Common myeloid progenitor, CD34-positive (primary cell): ENCODE measurements at regions of chr9 and their contacts with region 1.

Region 1: DNA sequence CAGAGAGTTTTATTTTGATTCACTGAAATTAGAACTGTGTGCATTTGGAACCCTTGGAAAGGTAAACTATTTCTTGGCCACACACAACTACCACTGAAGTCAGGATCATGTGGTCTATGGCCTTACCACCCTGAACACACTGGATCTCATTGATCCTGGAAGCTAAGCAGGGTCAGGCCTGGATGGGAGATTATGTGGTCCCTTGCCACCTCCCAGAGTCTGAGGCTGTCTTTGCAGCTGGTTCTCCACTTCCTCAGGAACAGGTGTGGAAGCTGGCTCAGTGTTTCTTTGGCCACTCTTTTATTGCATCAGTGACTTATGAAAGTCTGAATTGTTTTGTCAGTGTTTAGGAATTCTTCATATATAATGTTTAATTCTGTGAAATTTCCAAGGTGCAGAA is 89.2 kb downstream of the TEK start:
- DNase-seq: peak; percentile 20 to 50 (median 48)
- H3K4me3 ChIP-seq: no peak overlapping the region
- H3K27ac ChIP-seq: no peak overlapping the region
- H3K4me1 ChIP-seq: no peaks in the 10 kb centered on the region
- H3K27me3 ChIP-seq: no peaks in the 10 kb centered on the region

Region 2: GRCh38 chr9:27033823-27034403 is 164.3 kb before region 1 on chr9:
- CTCF ChIA-PET with region 1: interaction called, 12 read pairs
- POLR2A ChIA-PET with region 1: no interaction called
- DNase-seq: peak; percentile 52 to 71 (median 59)
- H3K4me3 ChIP-seq: no peak overlapping the region
- H3K27ac ChIP-seq: no peak overlapping the region
- H3K4me1 ChIP-seq: peaks cover 0 to 2% (median 0%) of the 10 kb centered on the region in 4 experiments
- H3K27me3 ChIP-seq: no peaks in the 10 kb centered on the region